CD14-positive monocyte (primary cell): ENCODE measurements at regions of chr7 and their contacts with region 1.

Region 1: GRCh38 chr7:44876393-44876792 is 8.9 kb downstream of the PURB start:
- DNase-seq: no peak
- H3K4me3 ChIP-seq: no peak overlapping the region
- H3K4me3 Mint-ChIP-seq: no peak overlapping the region
- H3K27ac ChIP-seq: no peak overlapping the region
- H3K27ac Mint-ChIP-seq: peak overlapping the region in 1 of 7 donors; percentile 54
- H3K4me1 ChIP-seq: peaks cover 13 to 21% of the 10 kb centered on the region in 2 donors
- H3K4me1 Mint-ChIP-seq: peaks cover 20% of the 10 kb centered on the region
- H3K27me3 ChIP-seq: no peaks in the 10 kb centered on the region
- H3K27me3 Mint-ChIP-seq: peaks cover 0 to 3% (median 1%) of the 10 kb centered on the region in 3 donors
- CTCF ChIP-seq: no peak

Region 2: DNA sequence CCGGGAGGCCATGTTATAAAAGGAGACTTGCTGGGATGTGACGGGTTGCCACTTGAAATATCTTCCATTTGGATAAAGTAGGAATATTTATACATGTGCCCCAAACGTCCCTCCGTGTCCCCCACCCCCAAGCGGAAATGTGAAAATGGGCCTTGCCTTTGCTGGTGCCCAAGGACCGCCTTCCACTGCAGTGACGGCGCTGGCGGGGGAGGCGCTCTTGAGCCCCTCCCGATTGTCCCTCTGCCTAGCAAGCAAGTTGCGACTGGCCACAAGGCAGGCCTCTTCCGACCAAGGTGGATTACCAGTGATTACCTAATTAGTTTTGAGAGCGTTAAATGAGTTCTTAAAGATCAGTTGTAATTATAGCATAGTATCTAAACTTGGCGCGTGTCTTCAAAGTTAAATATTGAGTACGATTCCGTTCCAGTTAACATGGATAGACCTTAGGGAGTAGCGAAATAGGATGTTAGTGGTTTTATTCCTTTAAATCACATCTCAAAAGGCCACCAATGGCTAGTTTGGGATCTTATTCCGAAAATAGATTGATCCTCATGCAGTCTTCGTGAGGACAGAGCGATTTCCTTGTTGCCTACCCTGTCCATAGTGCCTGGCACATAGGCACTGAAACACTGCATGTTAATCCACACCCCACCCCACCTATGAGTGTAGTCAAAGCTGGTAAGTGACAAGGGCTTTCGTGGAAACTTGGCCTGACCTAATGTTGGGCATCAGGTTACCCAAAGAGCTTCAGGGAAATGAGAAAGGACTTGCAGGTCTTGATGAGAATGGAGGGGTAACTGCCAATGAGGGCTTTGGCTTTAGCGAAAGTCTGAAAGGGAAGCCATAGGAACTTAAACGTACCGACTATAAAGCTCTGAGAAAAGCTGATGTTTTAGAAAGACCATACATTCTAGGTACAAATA is 78.8 kb before region 1 on chr7:
- intact Hi-C with region 1: no loop called
- DNase-seq: peak; percentile 78 to 86 (median 80)
- H3K4me3 ChIP-seq: peak overlapping the region; percentile 70 to 85 (median 82)
- H3K4me3 Mint-ChIP-seq: peak overlapping the region; percentile 92 to 96
- H3K27ac ChIP-seq: peak overlapping the region; percentile 94 to 95
- H3K27ac Mint-ChIP-seq: peak overlapping the region; percentile 97 to 99 (median 98)
- H3K4me1 ChIP-seq: peaks cover 23 to 30% of the 10 kb centered on the region in 2 donors
- H3K4me1 Mint-ChIP-seq: peaks cover 19% of the 10 kb centered on the region
- H3K27me3 ChIP-seq: no peaks in the 10 kb centered on the region
- H3K27me3 Mint-ChIP-seq: peaks cover 0 to 1% (median 0%) of the 10 kb centered on the region in 3 donors
- CTCF ChIP-seq: peak; percentile 63

Region 3: DNA sequence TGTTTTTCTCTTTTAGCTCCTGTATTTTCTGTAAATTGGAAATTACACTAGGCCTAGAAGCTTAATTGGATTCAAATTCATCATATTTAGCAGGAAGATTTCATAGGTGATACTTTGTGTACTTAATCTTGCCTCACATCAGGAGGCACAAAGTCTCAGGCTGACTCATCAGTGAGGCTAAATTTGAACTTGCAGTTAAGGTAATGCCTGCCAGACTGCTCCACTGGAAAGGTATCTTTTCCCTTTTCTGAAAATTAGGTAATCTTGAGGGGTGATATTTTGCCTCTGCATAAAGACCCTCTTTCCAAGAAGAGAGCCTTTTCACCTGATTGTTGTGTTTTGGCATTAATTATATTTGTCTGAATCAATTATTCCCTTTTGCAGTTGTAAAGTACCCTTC is 65.3 kb before region 1 on chr7:
- intact Hi-C with region 1: no loop called
- DNase-seq: no peak
- H3K4me3 ChIP-seq: no peak overlapping the region
- H3K4me3 Mint-ChIP-seq: no peak overlapping the region
- H3K27ac ChIP-seq: no peak overlapping the region
- H3K27ac Mint-ChIP-seq: no peak overlapping the region
- H3K4me1 ChIP-seq: no peaks in the 10 kb centered on the region
- H3K4me1 Mint-ChIP-seq: no peaks in the 10 kb centered on the region
- H3K27me3 ChIP-seq: no peaks in the 10 kb centered on the region
- H3K27me3 Mint-ChIP-seq: peaks cover 0 to 4% (median 0%) of the 10 kb centered on the region in 3 donors
- CTCF ChIP-seq: no peak

Region 4: GRCh38 chr7:44847508-44847920 is 28.9 kb before region 1 on chr7:
- intact Hi-C with region 1: no loop called
- DNase-seq: peak; percentile 73 to 82 (median 82)
- H3K4me3 ChIP-seq: peak overlapping the region; percentile 79 to 98 (median 89)
- H3K4me3 Mint-ChIP-seq: peak overlapping the region; percentile 91 to 98
- H3K27ac ChIP-seq: peak overlapping the region; percentile 88 to 92
- H3K27ac Mint-ChIP-seq: peak overlapping the region; percentile 95 to 99 (median 98)
- H3K4me1 ChIP-seq: peaks cover 36 to 53% of the 10 kb centered on the region in 2 donors
- H3K4me1 Mint-ChIP-seq: peaks cover 48% of the 10 kb centered on the region
- H3K27me3 ChIP-seq: no peaks in the 10 kb centered on the region
- H3K27me3 Mint-ChIP-seq: no peaks in the 10 kb centered on the region
- CTCF ChIP-seq: peak; percentile 93

Region 5: GRCh38 chr7:44914992-44915607 is 38.7 kb after region 1 on chr7:
- intact Hi-C with region 1: loop called (anchors 5 kb)
- DNase-seq: peak; percentile 62 to 84 (median 64)
- H3K4me3 ChIP-seq: no peak overlapping the region
- H3K4me3 Mint-ChIP-seq: no peak overlapping the region
- H3K27ac ChIP-seq: peak overlapping the region in 1 of 2 donors; percentile 16
- H3K27ac Mint-ChIP-seq: peak overlapping the region in 3 of 7 donors; percentile 41 to 79 (median 57)
- H3K4me1 ChIP-seq: no peaks in the 10 kb centered on the region
- H3K4me1 Mint-ChIP-seq: peaks cover 3% of the 10 kb centered on the region
- H3K27me3 ChIP-seq: no peaks in the 10 kb centered on the region
- H3K27me3 Mint-ChIP-seq: peaks cover 0 to 6% (median 1%) of the 10 kb centered on the region in 3 donors
- CTCF ChIP-seq: no peak